ENCODE measurements at regions of chr1 and their contacts with region 1.

Region 1: GRCh38 chr1:8348777-8349491 is 31.0 kb downstream of the SLC45A1 start:
- DNase-seq: no peak
- H3K4me3 ChIP-seq: no peak overlapping the region
- H3K27me3 ChIP-seq: no peaks in the 10 kb centered on the region; the same call in 1 of the 2 replicates
- CTCF ChIP-seq: peak; percentile 90

Region 2: GRCh38 chr1:7975212-7975865 is 373.6 kb before region 1 on chr1:
- CTCF ChIA-PET with region 1: interaction called, 35 read pairs
- POLR2A ChIA-PET with region 1: no interaction called
- DNase-seq: no peak
- H3K4me3 ChIP-seq: no peak overlapping the region
- H3K27me3 ChIP-seq: no peaks in the 10 kb centered on the region
- CTCF ChIP-seq: peak; percentile 94

Region 3: DNA sequence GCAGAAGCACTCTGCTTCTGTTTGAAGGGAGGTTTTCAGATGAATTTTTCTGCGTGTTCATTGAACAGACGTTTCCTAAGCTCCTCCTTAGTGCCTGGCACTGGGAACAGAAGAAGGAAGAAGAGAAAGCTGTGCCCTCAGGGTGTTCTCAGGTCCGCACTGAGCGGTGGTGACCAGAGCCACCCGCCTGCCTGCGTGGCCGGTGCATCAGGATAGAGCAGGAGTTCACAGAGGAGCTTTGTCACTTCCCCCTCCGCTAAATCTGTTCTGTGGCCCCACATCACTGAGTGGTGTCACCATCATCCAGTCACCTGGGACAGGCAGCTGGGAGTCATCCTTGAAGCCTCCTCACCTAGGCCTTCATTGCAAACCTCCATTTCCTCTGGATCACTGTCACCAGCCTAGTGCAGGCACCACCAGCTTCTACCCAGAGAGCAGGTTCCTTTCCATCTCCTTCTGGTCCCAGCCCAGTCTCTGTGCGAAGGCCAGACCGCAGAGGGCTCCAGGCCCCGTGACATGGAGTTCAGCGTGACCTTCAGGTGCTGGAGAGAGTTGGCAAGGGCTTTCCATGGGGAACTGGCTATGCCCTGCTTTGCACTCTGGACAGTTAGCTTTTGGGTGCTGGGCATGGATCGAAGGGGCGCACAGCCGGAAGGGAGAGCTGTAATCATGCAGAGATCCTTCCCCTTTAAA is 365.7 kb before region 1 on chr1:
- CTCF ChIA-PET with region 1: interaction called, 48 read pairs
- POLR2A ChIA-PET with region 1: no interaction called
- DNase-seq: no peak
- H3K4me3 ChIP-seq: no peak overlapping the region
- H3K27me3 ChIP-seq: no peaks in the 10 kb centered on the region
- CTCF ChIP-seq: no peak

Region 4: DNA sequence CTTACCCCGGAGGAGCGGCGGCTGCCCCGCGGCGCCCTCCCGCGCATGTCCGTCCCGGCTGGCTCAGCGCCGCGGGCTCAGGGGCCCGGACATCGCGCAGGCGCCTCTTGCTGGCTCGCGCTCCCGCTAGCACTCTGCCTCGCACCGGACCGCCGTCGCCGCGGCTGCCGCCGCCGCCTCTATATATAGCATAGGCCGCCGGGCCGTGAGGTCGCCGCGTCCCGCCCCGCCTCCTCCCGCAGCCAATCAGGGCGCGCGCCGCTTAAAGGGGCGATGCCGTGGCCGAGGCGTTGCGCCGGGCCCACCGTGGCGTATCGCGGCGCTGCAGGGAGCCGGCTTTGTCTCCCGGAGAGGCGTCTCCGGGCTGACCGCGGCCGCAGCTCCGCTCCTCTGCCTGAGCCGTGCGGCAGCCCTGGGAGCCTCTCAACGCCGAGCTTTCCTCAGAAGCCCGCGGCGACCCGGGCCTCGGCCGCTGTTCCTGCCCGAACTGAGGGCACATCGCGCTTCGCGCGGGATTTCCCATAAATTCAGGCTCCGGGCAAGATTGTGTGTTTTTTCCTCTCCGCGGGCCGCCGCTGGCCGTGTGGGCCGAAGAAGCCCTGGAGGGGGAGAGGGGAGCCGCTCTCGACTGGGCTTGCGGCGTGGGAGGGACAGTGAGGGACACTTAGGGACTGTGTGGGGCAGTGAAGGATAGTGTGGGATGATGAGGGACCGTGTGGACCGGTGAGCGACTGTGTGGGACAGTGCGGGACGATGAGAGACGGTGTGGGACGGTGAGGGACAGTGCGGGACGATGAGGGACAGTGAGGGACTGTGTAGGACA is 322.6 kb before region 1 on chr1 and contains the start of gene ERRFI1:
- CTCF ChIA-PET with region 1: interaction called, 20 read pairs
- POLR2A ChIA-PET with region 1: no interaction called
- DNase-seq: no peak
- H3K4me3 ChIP-seq: peak within 1 kb of the TSS; percentile 68
- H3K27me3 ChIP-seq: no peaks in the 10 kb centered on the region
- CTCF ChIP-seq: no peak
- polyA plus RNA-seq, gene ERRFI1: 20.5 and 30.3 TPM in 2 replicates

Region 5: GRCh38 chr1:8358904-8359603 is 10.1 kb after region 1 on chr1:
- CTCF ChIA-PET with region 1: interaction called, 17 read pairs
- POLR2A ChIA-PET with region 1: no interaction called
- DNase-seq: no peak
- H3K4me3 ChIP-seq: no peak overlapping the region
- H3K27me3 ChIP-seq: no peaks in the 10 kb centered on the region
- CTCF ChIP-seq: no peak